HepG2 (cell line): ENCODE measurements at regions of chr3 and their contacts with region 1.

Region 1: DNA sequence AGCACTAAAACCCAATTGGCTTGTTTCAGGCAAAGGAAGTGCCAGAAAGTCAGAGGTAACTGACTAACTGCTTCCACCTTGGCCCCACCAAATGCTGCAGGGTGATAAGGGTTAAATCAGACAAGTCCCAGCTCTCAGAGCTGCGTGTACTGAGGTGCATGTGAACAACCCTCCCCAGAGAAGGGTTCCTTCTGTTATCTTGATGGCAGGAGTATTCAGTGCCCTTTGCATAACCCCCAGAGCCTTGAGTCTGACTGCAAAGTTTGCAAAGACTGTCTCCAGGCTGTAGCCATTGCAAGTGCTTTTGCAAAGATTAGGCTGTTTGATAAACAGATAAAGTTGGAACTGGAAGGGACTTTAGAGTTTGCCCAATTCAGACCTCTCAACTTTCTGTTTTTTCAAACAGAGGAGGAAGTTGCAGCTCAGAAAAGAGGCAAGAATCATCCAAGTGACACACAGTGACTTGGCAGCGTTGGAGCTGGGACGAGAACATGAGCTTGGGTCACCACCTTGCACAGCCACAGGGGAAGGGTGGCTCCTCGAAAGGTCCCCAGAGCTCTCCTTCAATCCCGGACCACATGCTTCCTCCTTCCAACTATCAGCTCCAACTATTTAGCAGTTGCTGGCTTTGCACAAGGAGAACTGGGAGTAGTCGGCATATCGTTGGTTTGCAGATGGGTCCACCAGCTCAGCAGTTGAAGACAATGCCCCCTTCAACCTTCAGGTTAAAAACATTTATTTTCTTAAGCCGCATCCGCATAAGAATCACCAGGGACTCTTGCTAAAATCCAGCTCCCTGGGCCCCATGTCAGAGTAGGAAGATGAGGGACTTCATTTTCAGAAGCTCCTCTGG is 224.8 kb upstream of the HES1 start:
- DNase-seq: no peak
- ATAC-seq: no peak
- H3K4me3 ChIP-seq: no peak overlapping the region
- H3K27ac ChIP-seq: no peak overlapping the region
- H3K4me1 ChIP-seq: peaks cover 9% of the 10 kb centered on the region; the same call in 1 of the 2 replicates
- H3K27me3 ChIP-seq: peaks cover 0 to 3% of the 10 kb centered on the region in 2 experiments; a peak in 2 of 5 replicates
- CTCF ChIP-seq: no peak
- EP300 ChIP-seq: no peak
- POLR2A ChIP-seq: no peak
- RAD21 ChIP-seq: no peak

Region 2: DNA sequence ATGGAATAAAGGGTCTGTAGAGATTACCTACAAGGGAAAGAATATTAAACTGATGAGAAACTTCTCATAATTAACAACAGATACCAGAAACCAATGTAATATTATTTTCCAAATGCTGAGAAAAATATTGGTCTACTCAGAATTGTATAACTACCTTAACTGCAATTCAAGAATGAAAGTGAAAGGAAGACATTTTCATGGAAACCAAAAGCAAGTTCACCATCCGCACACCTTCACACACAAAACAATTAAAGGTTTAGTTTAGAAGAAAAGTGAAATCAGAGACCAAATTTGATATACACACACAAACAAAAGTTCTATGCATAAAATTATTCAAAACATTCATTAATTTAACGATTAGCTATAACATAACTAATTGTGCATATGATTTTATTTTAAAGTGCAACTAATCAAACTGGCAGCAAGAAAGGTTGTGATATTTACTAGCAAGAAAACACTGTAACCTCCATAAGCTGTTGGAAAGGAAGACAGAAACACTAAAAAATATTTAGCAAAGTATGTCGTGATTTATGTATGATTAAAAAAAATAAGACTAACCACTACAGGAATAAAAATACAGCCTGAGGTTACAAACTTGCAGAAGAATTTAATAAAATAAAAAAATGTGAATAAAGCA is 1579.2 kb before region 1 on chr3:
- CTCF ChIA-PET with region 1: no interaction called
- POLR2A ChIA-PET with region 1: no interaction called
- in situ Hi-C with region 1: no loop called
- intact Hi-C with region 1: loop called (anchors 10 kb)
- DNase-seq: no peak
- ATAC-seq: no peak
- H3K4me3 ChIP-seq: no peak overlapping the region
- H3K27ac ChIP-seq: no peak overlapping the region
- H3K4me1 ChIP-seq: no peaks in the 10 kb centered on the region
- H3K27me3 ChIP-seq: no peaks in the 10 kb centered on the region
- CTCF ChIP-seq: no peak
- EP300 ChIP-seq: no peak
- POLR2A ChIP-seq: no peak
- RAD21 ChIP-seq: no peak

Region 3: GRCh38 chr3:193857996-193858395 is 53.1 kb before region 1 on chr3:
- CTCF ChIA-PET with region 1: no interaction called
- POLR2A ChIA-PET with region 1: no interaction called
- in situ Hi-C with region 1: no loop called
- intact Hi-C with region 1: no loop called
- DNase-seq: no peak
- ATAC-seq: no peak
- H3K4me3 ChIP-seq: no peak overlapping the region
- H3K27ac ChIP-seq: no peak overlapping the region
- H3K4me1 ChIP-seq: no peaks in the 10 kb centered on the region
- H3K27me3 ChIP-seq: peaks cover 2 to 15% of the 10 kb centered on the region in 2 experiments; a peak in 4 of 5 replicates
- CTCF ChIP-seq: no peak
- EP300 ChIP-seq: no peak
- POLR2A ChIP-seq: no peak
- RAD21 ChIP-seq: no peak